ENCODE measurements at regions of chr12 and their contacts with region 1.

Region 1: DNA sequence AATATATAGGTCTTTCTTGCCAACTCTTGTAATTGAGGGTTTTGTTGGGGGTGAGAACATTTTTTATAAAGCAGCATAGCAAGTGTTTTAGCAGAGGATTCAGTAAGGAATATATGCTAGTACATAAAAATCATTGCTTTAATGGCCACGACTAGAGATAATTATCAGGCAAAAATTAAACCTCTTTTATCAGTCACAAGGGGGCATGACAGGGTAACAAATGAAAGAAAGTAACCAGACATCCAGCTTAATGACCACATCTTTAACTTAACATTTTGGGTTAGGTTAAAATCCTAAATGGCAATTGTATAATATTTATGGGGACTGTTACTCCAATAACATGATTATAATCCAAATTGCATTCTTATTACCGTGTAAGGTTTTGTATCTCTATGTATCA is 119.6 kb downstream of the LRRIQ1 start:
- DNase-seq: peak in 1 of 2 experiments; percentile 21
- H3K4me3 ChIP-seq: no peak overlapping the region
- H3K4me1 ChIP-seq: no peaks in the 10 kb centered on the region
- H3K27me3 ChIP-seq: peaks cover 3% of the 10 kb centered on the region; the same call in 1 of the 2 replicates

Region 2: GRCh38 chr12:85424581-85425348 is 269.0 kb after region 1 on chr12:
- in situ Hi-C with region 1: loop called (anchors 25 kb)
- DNase-seq: peak; percentile 48 to 58
- H3K4me3 ChIP-seq: no peak overlapping the region
- H3K4me1 ChIP-seq: no peaks in the 10 kb centered on the region
- H3K27me3 ChIP-seq: peaks cover 56% of the 10 kb centered on the region